ENCODE measurements at regions of chr19 and their contacts with region 1.

Region 1: DNA sequence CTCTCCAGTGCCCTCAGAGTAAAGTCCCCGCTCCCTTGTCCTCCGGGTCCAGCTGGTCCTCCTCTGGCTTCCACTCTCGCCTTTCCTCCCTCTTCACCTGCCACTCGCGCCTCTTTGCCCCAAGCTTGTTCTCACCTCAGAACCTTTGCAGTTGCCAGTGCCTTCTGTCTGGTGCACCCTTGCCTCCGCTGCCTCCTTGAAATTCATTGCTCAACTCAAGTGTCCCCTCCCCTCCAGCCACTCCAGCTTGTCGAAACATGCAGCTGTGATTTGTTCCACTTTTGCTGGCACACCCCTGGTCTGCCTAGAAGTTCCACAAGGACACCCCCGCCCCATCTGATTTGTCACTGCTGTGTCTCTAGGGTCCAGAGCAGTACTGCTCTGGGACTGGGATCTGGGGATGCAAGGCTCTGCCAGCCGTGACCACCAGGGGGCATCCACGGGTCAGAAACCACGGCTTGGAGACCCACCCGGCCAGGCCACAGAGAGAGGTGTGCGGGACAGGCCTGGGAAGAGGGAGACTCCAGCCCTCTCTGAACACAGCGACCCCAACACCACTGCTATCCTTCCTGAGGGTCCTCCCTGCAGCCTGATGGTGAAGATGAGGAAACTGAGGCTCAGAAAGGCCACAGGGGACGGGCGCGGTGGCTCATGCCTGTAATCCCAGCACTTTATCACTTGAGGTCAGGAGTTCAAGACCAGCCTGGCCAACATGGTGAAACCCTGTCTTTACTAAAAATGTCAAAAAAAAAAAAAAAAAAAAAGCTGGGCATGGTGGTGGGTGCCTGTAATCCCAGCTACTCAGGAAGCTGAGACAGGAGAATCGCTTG is 49.9 kb downstream of the AP1M1 start:
- DNase-seq: peak; percentile 66 to 89 (median 80)
- ATAC-seq: peak; percentile 71
- H3K4me3 Mint-ChIP-seq: peak overlapping the region; percentile 21 to 84 (median 61)
- H3K27ac Mint-ChIP-seq: peak overlapping the region; percentile 80 to 97 (median 92)
- H3K4me1 Mint-ChIP-seq: peaks cover 14 to 54% (median 39%) of the 10 kb centered on the region in 4 donors
- H3K27me3 Mint-ChIP-seq: no peaks in the 10 kb centered on the region

Region 2: DNA sequence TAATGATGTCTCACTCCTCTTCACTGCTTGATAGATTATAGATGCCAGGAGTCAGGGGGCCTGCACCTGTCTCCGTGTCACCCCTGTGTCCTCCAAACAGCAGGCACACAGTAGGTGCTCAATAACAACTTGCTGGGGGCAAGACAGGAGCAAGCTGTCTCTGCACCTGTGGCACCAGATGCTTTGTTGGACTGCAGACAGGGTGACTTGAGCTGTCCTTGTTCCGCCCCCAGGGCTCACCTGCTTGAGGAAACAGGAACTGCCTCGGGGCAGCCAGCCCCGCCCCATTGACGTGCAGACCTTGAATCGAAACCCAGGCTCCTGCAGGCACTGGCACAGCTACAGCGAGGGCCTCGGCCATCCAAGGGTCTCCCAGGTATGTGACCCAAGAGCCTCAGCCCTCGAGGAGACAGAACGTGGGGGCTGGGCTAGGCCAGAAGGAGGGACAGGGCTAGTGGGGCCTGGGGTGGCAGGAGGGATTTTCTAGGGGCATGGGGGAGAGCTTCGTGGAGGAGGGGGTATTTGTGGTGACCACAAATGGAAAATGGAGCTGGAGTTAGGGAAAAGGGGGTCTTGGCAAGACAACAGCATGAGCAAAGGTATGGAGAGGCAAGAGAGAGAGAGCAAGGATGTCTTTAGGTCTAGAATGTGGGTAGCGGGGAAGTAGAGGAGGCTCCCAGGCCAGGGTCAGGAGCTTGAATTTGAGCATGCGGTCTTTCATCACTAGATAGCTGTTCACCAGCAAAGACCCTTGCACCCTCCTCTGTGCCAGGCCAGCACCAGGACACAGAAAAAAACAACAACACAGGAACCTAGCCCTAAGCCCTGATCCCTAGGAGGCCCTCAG is 103.9 kb before region 1 on chr19 and contains the start of gene HSH2D:
- POLR2A ChIA-PET with region 1: no interaction called
- DNase-seq: peak; percentile 63 to 90 (median 76)
- ATAC-seq: peak; percentile 99 to 100
- H3K4me3 Mint-ChIP-seq: peak within 1 kb of the TSS; percentile 91 to 100 (median 96)
- H3K27ac Mint-ChIP-seq: peak within 1 kb of the TSS; percentile 93 to 100 (median 98)
- H3K4me1 Mint-ChIP-seq: peaks cover 17 to 81% (median 39%) of the 10 kb centered on the region in 4 donors
- H3K27me3 Mint-ChIP-seq: no peaks in the 10 kb centered on the region
- polyA plus RNA-seq, gene HSH2D: 6.5 to 9.8 (median 6.7) TPM

Region 3: DNA sequence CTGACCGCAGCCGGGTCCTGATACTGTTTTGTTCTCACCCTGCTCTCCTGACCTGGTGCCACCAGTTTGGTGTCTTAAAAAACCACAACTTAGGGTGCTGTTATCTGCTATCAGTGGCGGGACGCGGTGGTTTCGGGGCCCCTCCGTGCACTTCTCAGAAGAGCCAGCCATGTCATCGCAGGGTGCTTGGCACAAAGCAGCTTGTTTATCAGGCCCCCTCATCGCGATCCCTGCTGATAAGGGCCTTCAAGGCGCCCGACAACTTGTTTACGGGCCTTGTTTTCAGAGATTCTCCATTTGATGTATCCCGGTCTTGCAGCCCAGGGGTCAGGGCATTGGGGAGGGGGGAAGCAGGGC is 19.0 kb after region 1 on chr19:
- POLR2A ChIA-PET with region 1: interaction called, 30 read pairs
- DNase-seq: peak; percentile 37 to 78 (median 60)
- ATAC-seq: peak; percentile 72 to 76
- H3K4me3 Mint-ChIP-seq: peak overlapping the region; percentile 34 to 86 (median 68)
- H3K27ac Mint-ChIP-seq: peak overlapping the region; percentile 81 to 97 (median 88)
- H3K4me1 Mint-ChIP-seq: peaks cover 26 to 72% (median 60%) of the 10 kb centered on the region in 4 donors
- H3K27me3 Mint-ChIP-seq: no peaks in the 10 kb centered on the region

Region 4: DNA sequence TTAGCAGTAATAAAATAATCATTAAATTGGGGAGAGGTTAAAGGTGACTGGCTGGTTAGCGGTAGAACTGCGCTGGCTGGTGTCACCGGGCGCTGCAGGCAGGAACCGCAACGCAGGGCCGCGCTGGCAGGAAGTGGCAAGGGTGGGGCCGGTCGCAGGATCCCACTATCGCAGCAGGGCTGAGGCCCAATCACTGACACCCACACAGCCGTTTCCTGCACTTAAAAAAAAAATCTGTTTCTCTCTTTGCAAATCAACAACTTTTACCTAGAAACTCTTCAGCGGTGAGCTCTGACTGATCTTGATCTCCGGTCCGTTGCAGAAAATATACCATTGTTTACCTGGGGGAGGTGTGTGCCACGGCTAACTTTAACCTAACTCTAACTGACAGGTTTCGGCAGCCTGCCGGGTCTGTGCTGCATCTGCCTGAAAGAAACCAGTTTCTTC is 124.0 kb after region 1 on chr19:
- POLR2A ChIA-PET with region 1: interaction called, 177 read pairs
- DNase-seq: peak; percentile 77 to 97 (median 94)
- ATAC-seq: peak; percentile 41 to 59
- H3K4me3 Mint-ChIP-seq: no peak overlapping the region
- H3K27ac Mint-ChIP-seq: no peak overlapping the region
- H3K4me1 Mint-ChIP-seq: peaks cover 0 to 54% (median 20%) of the 10 kb centered on the region in 4 donors
- H3K27me3 Mint-ChIP-seq: peaks cover 0 to 2% (median 0%) of the 10 kb centered on the region in 5 donors

Region 5: DNA sequence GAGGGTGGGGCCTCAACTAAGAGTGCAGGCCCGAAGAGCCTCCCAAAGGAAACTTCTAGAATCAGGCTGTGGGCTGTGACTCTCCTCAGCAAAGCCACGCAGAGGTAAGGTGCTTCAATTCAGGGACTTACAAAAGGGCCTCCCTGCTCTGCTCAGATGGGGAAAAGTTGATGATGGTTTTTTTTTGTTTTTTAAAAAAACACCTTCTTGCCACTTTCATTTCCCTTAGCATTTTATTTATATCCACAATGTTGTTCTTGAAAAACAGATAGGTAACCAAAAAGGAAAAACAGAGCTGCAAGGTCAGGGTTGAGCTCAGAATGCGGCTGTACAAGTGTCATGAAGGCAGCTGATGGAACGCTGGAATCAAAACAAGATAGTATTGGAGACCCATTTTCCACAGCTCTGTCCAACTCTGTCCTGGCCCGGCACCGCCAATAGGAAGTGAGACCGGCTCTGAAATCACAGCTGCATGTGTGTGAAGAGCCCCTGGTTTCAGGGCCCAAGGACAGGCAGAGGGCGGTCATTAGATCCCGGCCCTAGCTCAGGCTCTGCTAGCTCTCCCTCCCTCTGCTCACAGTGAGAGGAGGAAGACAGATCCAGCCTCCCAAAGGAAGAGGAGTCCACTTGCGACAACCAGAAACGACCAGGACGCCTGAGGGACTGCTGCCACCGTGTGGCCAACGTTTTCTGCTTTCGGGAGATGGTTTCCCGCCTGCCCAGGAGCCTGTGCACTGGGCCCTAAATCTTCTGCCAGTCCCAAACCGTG is 135.4 kb after region 1 on chr19:
- POLR2A ChIA-PET with region 1: interaction called, 177 read pairs
- DNase-seq: peak; percentile 66 to 88 (median 76)
- ATAC-seq: peak; percentile 78
- H3K4me3 Mint-ChIP-seq: peak overlapping the region; percentile 43 to 84 (median 72)
- H3K27ac Mint-ChIP-seq: peak overlapping the region in 8 of 10 donors; percentile 90 to 98 (median 98)
- H3K4me1 Mint-ChIP-seq: peaks cover 35 to 61% (median 53%) of the 10 kb centered on the region in 4 donors
- H3K27me3 Mint-ChIP-seq: no peaks in the 10 kb centered on the region